ENCODE measurements at regions of chr2 and their contacts with region 1.

Region 1: DNA sequence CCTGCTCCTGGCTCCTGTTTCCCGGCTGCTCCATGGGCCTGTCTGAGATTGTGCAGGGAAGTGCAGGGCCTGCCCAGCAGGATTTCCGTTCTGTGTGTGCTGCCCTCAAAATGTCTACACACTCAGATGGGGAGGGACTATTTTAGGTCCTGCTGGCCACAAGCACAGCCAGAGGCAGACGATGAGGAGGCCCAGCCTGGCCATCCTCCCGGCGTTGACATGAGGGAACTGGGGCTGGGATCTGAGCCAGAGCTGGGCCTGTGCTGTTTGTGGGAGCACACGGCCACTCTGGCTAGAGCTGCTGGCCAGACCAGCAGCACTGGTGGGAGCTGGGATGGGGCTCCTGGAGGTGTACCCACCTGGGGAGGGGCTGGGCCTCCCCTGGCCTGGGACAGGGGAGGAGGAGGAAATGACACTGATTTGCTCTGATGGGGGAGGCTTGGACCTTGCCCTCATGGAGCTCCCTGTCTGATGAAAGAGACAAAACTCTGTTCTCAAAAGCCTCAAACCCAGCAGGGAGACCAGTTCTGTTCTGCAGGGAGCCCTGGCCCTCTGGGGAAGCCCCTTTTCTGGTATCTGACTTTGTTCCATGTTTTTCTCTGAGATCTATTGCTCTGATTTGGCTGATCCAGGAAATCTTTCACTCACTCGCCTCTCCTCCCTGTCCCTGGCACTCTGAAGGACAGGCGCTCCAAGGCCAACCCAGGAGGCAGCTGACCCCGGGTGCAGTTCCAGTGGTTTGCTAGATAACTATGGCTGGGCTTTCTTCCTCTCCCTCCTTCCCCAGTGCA is 161.8 kb downstream of the DYSF start:
- DNase-seq: peak; percentile 89 to 95 (median 93)
- ATAC-seq: peak; percentile 92 to 95 (median 93)
- H3K4me3 ChIP-seq: no peak overlapping the region
- H3K27ac ChIP-seq: peak overlapping the region; percentile 78 to 96 (median 87)
- H3K4me1 ChIP-seq: peaks cover 18 to 49% (median 41%) of the 10 kb centered on the region in 12 donors
- H3K27me3 ChIP-seq: no peaks in the 10 kb centered on the region
- CTCF ChIP-seq: no peak
- POLR2A ChIP-seq: no peak

Region 2: GRCh38 chr2:71451641-71452040 is 163.5 kb before region 1 on chr2:
- intact Hi-C with region 1: no loop called
- DNase-seq: no peak
- ATAC-seq: peak in 2 of 4 donors; percentile 11 to 40
- H3K4me3 ChIP-seq: no peak overlapping the region
- H3K27ac ChIP-seq: peak overlapping the region; percentile 49 to 92 (median 90)
- H3K4me1 ChIP-seq: peaks cover 0 to 59% (median 48%) of the 10 kb centered on the region in 12 donors
- H3K27me3 ChIP-seq: peaks cover 0 to 12% (median 0%) of the 10 kb centered on the region in 9 donors
- CTCF ChIP-seq: no peak
- POLR2A ChIP-seq: no peak

Region 3: DNA sequence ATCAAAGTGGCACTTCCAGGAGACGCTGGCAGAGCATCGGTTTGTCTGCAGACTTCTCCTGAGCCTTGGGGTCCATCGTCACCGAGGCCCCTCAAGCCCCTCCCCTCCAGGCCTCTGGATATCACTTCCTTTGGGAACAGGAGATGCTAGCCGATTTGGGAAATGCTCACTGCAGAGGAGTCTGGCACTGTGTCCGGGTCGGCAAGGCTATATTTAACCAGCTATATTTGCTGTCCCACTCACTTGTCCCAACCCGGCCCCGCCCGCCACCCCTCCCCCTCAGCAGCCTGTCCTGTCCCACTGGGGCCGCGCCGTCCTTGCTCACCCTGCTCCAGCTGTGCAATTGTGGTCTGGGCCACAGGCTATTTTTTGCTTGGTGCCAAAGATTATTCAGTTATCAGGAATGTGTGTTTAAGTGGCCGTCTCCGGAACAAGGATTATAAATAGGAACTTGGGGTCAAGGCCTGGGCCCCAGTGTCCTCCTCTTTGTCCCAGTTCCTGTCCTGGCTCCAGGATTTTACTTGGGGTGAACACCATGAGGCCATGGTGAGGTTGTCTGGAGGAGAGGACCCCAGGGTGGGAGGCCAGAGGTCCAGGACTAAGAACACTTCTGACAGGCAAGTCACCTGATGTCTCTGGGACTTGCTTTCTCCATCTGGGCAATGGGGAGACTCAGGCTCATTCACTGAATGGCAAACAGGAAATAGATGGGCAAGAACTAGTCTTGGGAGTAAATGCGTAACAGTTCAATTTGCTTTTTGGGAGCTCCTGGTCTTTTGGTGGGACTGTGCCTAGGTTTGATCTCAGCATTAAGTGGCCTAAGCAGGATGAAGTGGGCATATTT is 101.8 kb after region 1 on chr2:
- intact Hi-C with region 1: loop called in 1 of 10 experiments (anchors 1 kb)
- DNase-seq: peak; percentile 94 to 97 (median 95)
- ATAC-seq: peak; percentile 94 to 97 (median 96)
- H3K4me3 ChIP-seq: peak overlapping the region in 1 of 12 donors; percentile 7
- H3K27ac ChIP-seq: peak overlapping the region in 10 of 12 donors; percentile 38 to 89 (median 74)
- H3K4me1 ChIP-seq: peaks cover 0 to 84% (median 44%) of the 10 kb centered on the region in 12 donors
- H3K27me3 ChIP-seq: no peaks in the 10 kb centered on the region
- CTCF ChIP-seq: no peak
- POLR2A ChIP-seq: no peak

Region 4: GRCh38 chr2:71736091-71736861 is 121.1 kb after region 1 on chr2:
- intact Hi-C with region 1: no loop called
- DNase-seq: peak in 1 of 5 donors; percentile 47
- ATAC-seq: peak in 3 of 4 donors; percentile 42 to 65 (median 55)
- H3K4me3 ChIP-seq: no peak overlapping the region
- H3K27ac ChIP-seq: no peak overlapping the region
- H3K4me1 ChIP-seq: peaks cover 0 to 13% (median 2%) of the 10 kb centered on the region in 12 donors
- H3K27me3 ChIP-seq: no peaks in the 10 kb centered on the region
- CTCF ChIP-seq: no peak
- POLR2A ChIP-seq: no peak

Region 5: DNA sequence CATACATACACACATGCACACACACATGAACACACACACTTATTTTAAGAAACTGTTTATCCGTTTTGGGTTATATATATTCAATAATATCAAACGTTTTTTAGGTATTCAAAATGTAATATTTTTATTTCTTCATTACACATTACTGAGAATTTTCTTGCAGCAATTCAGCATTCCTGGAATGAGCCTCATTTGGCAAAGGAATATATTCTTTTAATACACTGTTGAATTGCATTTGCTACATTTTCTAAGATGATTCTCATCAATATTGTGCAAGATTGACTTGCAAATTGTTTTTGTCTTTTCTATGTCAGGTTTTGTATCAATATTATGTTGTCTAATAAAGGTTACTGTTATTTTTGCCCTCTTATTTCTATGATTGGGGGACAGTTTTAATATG is 808.6 kb after region 1 on chr2:
- intact Hi-C with region 1: no loop called
- DNase-seq: no peak
- ATAC-seq: no peak
- H3K4me3 ChIP-seq: no peak overlapping the region
- H3K27ac ChIP-seq: no peak overlapping the region
- H3K4me1 ChIP-seq: no peaks in the 10 kb centered on the region
- H3K27me3 ChIP-seq: no peaks in the 10 kb centered on the region
- CTCF ChIP-seq: no peak
- POLR2A ChIP-seq: no peak